Upper lobe of right lung (tissue), 1 donor: ENCODE measurements at regions of chr10 and their contacts with region 1.

Region 1: GRCh38 chr10:86599729-86600128 is 54.6 kb upstream of the OPN4 start:
- DNase-seq: no peak
- ATAC-seq: peak; percentile 66
- H3K4me3 ChIP-seq: no peak overlapping the region
- H3K27ac ChIP-seq: no peak overlapping the region
- H3K4me1 ChIP-seq: no peaks in the 10 kb centered on the region
- H3K27me3 ChIP-seq: no peaks in the 10 kb centered on the region
- CTCF ChIP-seq: no peak

Region 2: GRCh38 chr10:86399879-86400704 is 199.6 kb before region 1 on chr10:
- intact Hi-C with region 1: loop called (anchors 10 kb)
- DNase-seq: peak; percentile 97
- ATAC-seq: peak; percentile 96
- H3K4me3 ChIP-seq: peak overlapping the region; percentile 67
- H3K27ac ChIP-seq: peak overlapping the region; percentile 73
- H3K4me1 ChIP-seq: peaks cover 22% of the 10 kb centered on the region
- H3K27me3 ChIP-seq: peaks cover 14% of the 10 kb centered on the region
- CTCF ChIP-seq: peak; percentile 97

Region 3: GRCh38 chr10:86411281-86411841 is 188.4 kb before region 1 on chr10:
- intact Hi-C with region 1: no loop called
- DNase-seq: no peak
- ATAC-seq: peak; percentile 89
- H3K4me3 ChIP-seq: no peak overlapping the region
- H3K27ac ChIP-seq: peak overlapping the region; percentile 51
- H3K4me1 ChIP-seq: peaks cover 13% of the 10 kb centered on the region
- H3K27me3 ChIP-seq: peaks cover 4% of the 10 kb centered on the region
- CTCF ChIP-seq: no peak